BJ (cell line): ENCODE measurements at regions of chr15 and their contacts with region 1.

Region 1: DNA sequence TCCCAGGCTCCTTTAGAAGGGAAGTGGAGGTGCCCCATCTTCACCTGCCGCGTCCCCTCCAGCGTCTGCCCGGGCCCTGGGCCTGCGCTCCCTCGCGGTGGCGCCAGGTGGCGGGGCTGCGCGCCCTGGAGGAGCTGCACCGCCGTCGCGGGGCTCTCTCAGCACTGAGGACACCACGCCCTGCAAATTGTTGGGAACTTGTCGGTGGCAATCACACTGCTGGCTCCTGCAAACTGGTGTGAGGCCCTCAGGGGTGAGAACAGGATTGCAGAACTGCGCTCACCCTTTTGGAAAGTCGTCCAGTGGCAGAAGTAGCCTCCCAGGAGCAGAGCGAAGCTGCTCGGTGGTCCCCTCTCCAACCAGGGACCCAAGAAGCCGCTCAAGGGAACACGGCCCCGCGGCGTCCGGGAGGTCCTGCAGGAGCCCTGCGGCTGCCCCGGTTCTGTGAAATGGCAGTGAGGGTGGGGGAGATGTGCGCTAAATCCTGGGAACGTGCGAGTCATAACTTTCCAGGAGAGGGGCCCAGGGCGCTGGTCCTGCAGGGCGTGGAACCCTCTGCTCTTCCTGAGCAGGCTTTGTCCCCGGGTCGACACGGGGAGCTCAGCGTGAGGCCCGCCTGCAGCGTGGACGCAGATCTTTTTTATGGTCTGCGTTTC is 995 bp upstream of the LRRK1 start:
- DNase-seq: no peak
- H3K4me3 ChIP-seq: peak overlapping the region; percentile 66
- H3K27me3 ChIP-seq: no peaks in the 10 kb centered on the region
- CTCF ChIP-seq: peak; percentile 73

Region 2: GRCh38 chr15:100671858-100672543 is 246.2 kb before region 1 on chr15:
- CTCF ChIA-PET with region 1: interaction called, 18 read pairs
- POLR2A ChIA-PET with region 1: no interaction called
- DNase-seq: peak; percentile 16
- H3K4me3 ChIP-seq: no peak overlapping the region
- H3K27me3 ChIP-seq: no peaks in the 10 kb centered on the region
- CTCF ChIP-seq: peak; percentile 86

Region 3: DNA sequence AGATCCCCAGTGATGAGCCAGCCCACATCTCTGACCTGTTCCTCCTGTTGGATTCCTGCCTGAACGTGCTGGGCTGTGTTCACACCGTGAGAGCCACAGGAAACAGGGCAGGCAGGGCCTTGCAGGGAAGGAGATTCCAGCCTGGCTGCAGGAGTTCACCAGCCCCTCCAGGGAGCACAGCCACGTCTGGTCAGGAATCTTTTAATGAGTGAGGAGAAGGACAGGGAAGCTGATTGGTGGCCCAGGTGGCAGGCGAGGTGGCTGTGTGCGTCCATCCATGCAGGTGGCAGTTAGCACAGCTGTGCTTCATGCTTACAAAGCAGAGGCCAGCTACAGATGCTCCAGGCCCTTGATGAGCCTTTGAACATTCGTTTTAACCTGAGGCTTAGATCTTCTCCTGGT is 11.5 kb after region 1 on chr15:
- CTCF ChIA-PET with region 1: interaction called, 47 read pairs
- POLR2A ChIA-PET with region 1: no interaction called
- DNase-seq: no peak
- H3K4me3 ChIP-seq: no peak overlapping the region
- H3K27me3 ChIP-seq: no peaks in the 10 kb centered on the region
- CTCF ChIP-seq: no peak

Region 4: GRCh38 chr15:100958326-100959065 is 40.3 kb after region 1 on chr15:
- CTCF ChIA-PET with region 1: interaction called, 10 read pairs
- POLR2A ChIA-PET with region 1: no interaction called
- DNase-seq: no peak
- H3K4me3 ChIP-seq: no peak overlapping the region
- H3K27me3 ChIP-seq: no peaks in the 10 kb centered on the region
- CTCF ChIP-seq: no peak

Region 5: GRCh38 chr15:101008158-101009139 is 90.3 kb after region 1 on chr15:
- CTCF ChIA-PET with region 1: interaction called, 376 read pairs
- POLR2A ChIA-PET with region 1: no interaction called
- DNase-seq: no peak
- H3K4me3 ChIP-seq: no peak overlapping the region
- H3K27me3 ChIP-seq: no peaks in the 10 kb centered on the region
- CTCF ChIP-seq: peak; percentile 72